CD8-positive, alpha-beta T cell (primary cell): ENCODE measurements at regions of chr13 and their contacts with region 1.

Region 1: GRCh38 chr13:40982772-40983171 is 36.3 kb downstream of the ELF1 start:
- DNase-seq: peak in 7 of 9 experiments; percentile 35 to 92 (median 59)
- ATAC-seq: peak; percentile 61
- H3K4me3 ChIP-seq: peak overlapping the region; percentile 36 to 52
- H3K4me3 Mint-ChIP-seq: peak overlapping the region; percentile 95
- H3K27ac ChIP-seq: peak overlapping the region; percentile 76 to 89
- H3K27ac Mint-ChIP-seq: peak overlapping the region; percentile 92
- H3K4me1 ChIP-seq: peaks cover 45% of the 10 kb centered on the region
- H3K4me1 Mint-ChIP-seq: peaks cover 61% of the 10 kb centered on the region
- H3K27me3 ChIP-seq: no peaks in the 10 kb centered on the region
- H3K27me3 Mint-ChIP-seq: no peaks in the 10 kb centered on the region
- CTCF ChIP-seq: no peak

Region 2: DNA sequence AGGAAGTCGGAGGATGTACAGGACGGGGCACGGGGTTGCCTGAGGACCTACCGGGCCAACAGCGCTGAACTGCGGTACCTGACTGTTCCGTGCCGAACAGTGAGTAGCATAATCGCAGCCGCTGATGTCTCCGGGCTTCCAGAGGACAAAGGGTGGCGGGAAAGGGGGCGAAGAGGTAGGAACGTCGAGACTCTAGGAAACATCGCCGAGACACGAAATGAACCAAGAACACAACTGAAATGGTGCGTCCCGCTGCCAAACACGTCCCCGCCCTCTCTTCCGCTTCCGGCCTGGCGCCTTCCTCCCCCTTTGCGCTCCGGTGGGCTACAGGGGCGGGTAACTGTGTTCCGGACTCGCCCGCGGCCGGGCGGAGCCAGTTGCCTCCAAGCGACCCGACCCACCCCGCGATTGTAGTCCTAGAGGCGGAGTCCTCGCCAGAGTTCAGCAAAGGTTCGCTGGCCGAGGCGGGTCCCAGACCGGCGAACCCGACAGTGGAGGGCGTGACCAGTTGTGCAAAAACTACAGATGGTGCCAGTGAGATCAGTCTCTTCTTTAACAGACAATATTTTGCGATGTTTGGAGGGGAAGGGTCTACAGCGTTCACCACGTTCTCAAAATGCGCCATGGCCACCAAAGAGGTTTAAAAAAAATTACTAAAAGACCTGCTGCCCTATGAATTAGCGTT is 211.7 kb before region 1 on chr13 and contains the start of gene MRPS31:
- CTCF ChIA-PET with region 1: no interaction called
- POLR2A ChIA-PET with region 1: no interaction called
- intact Hi-C with region 1: loop called in 1 of 2 experiments (anchors 5 kb)
- DNase-seq: peak; percentile 88 to 98 (median 95)
- ATAC-seq: peak; percentile 94
- H3K4me3 ChIP-seq: peak within 1 kb of the TSS; percentile 89 to 92
- H3K4me3 Mint-ChIP-seq: peak within 1 kb of the TSS; percentile 99
- H3K27ac ChIP-seq: peak within 1 kb of the TSS; percentile 74 to 87
- H3K27ac Mint-ChIP-seq: peak within 1 kb of the TSS; percentile 98
- H3K4me1 ChIP-seq: peaks cover 20% of the 10 kb centered on the region
- H3K4me1 Mint-ChIP-seq: peaks cover 41% of the 10 kb centered on the region
- H3K27me3 ChIP-seq: no peaks in the 10 kb centered on the region
- H3K27me3 Mint-ChIP-seq: no peaks in the 10 kb centered on the region
- CTCF ChIP-seq: no peak
- total RNA-seq, gene MRPS31: 7.3 to 7.5 TPM

Region 3: GRCh38 chr13:40969169-40969901 is 13.4 kb before region 1 on chr13:
- CTCF ChIA-PET with region 1: interaction called, 37 read pairs
- POLR2A ChIA-PET with region 1: interaction called, 5 read pairs
- intact Hi-C with region 1: loop called in 1 of 2 experiments (anchors 1 kb)
- DNase-seq: peak in 3 of 9 experiments; percentile 18 to 51 (median 29)
- ATAC-seq: peak; percentile 69
- H3K4me3 ChIP-seq: no peak overlapping the region
- H3K4me3 Mint-ChIP-seq: peak overlapping the region; percentile 40
- H3K27ac ChIP-seq: peak overlapping the region in 1 of 2 experiments; percentile 18
- H3K27ac Mint-ChIP-seq: peak overlapping the region; percentile 60
- H3K4me1 ChIP-seq: peaks cover 97% of the 10 kb centered on the region
- H3K4me1 Mint-ChIP-seq: peaks cover 95% of the 10 kb centered on the region
- H3K27me3 ChIP-seq: no peaks in the 10 kb centered on the region
- H3K27me3 Mint-ChIP-seq: no peaks in the 10 kb centered on the region
- CTCF ChIP-seq: no peak

Region 4: GRCh38 chr13:41004875-41005693 is 22.3 kb after region 1 on chr13:
- CTCF ChIA-PET with region 1: interaction called, 3 read pairs
- POLR2A ChIA-PET with region 1: interaction called, 5 read pairs
- intact Hi-C with region 1: loop called in 1 of 2 experiments (anchors 1 kb)
- DNase-seq: peak in 2 of 9 experiments; percentile 62 to 80
- ATAC-seq: peak; percentile 83
- H3K4me3 ChIP-seq: peak overlapping the region; percentile 6 to 13
- H3K4me3 Mint-ChIP-seq: peak overlapping the region; percentile 73
- H3K27ac ChIP-seq: peak overlapping the region; percentile 18 to 76
- H3K27ac Mint-ChIP-seq: peak overlapping the region; percentile 90
- H3K4me1 ChIP-seq: peaks cover 78% of the 10 kb centered on the region
- H3K4me1 Mint-ChIP-seq: peaks cover 79% of the 10 kb centered on the region
- H3K27me3 ChIP-seq: no peaks in the 10 kb centered on the region
- H3K27me3 Mint-ChIP-seq: no peaks in the 10 kb centered on the region
- CTCF ChIP-seq: no peak

Region 5: DNA sequence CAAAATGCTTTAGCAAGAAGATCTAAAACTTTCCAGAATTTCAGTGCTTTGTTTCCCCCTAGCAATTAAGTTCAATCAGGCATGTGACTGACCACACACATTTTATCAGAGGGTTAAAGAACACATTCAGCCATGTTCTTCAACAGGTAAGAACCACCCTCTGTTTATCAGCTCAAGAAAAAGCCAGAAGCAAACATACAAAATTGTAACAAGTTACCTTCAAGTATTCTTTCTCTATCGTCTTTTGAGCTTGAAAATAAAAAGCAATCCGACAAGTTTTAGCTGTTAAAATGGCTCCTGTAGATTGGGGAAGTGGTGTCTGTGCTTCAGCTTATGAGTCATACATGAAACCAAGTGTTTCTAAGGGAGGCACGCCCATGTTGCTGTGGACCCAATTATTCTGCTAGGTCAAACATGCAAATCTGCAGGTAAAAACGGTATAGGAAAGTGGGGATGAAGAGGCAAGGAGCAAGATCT is 36.3 kb after region 1 on chr13 and contains the start of gene ELF1:
- CTCF ChIA-PET with region 1: interaction called, 4 read pairs
- POLR2A ChIA-PET with region 1: interaction called, 16 read pairs
- intact Hi-C with region 1: loop called (anchors 1 to 2 kb)
- DNase-seq: peak in 8 of 9 experiments; percentile 28 to 89 (median 63)
- ATAC-seq: peak; percentile 88
- H3K4me3 ChIP-seq: peak within 1 kb of the TSS; percentile 56 to 68
- H3K4me3 Mint-ChIP-seq: peak within 1 kb of the TSS; percentile 88
- H3K27ac ChIP-seq: peak within 1 kb of the TSS; percentile 91 to 95
- H3K27ac Mint-ChIP-seq: peak within 1 kb of the TSS; percentile 97
- H3K4me1 ChIP-seq: peaks cover 25% of the 10 kb centered on the region
- H3K4me1 Mint-ChIP-seq: peaks cover 47% of the 10 kb centered on the region
- H3K27me3 ChIP-seq: no peaks in the 10 kb centered on the region
- H3K27me3 Mint-ChIP-seq: no peaks in the 10 kb centered on the region
- CTCF ChIP-seq: no peak
- total RNA-seq, gene ELF1: 308 to 313 TPM

Region 6: DNA sequence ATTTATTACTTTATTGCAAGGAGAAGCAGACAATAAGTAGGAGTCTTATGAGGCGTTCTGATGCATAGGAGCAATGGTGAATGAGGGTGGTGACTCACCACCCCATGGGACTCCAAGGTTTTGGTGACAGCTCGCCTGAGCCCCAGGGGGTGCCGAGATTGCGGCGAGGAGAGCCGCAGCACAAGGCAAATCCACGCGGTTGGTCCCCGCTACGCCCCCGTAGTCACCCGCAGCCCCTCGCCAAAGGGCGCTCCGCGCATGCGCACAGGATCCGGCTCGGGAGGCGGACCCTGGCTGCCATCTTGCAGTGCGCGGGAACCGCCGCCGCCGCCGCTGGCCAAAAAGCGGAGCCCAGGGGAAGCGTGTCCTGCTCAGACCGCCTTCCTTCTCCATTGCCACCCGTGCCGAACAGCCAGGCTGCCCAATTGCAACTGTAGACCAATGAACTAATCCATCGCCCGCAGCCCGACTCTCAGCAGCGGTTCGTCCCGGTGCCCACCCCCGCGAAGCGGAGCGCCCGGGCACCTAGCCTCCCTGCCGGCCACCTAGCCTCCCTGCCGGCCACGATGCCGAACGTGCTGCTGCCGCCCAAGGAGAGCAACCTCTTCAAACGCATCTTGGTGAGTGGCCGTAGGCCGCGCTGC is 328.3 kb after region 1 on chr13 and contains the start of gene NAA16:
- CTCF ChIA-PET with region 1: no interaction called
- POLR2A ChIA-PET with region 1: no interaction called
- intact Hi-C with region 1: loop called (anchors 5 to 10 kb)
- DNase-seq: peak; percentile 87 to 98 (median 95)
- ATAC-seq: peak; percentile 88
- H3K4me3 ChIP-seq: peak within 1 kb of the TSS; percentile 72 to 97
- H3K4me3 Mint-ChIP-seq: peak within 1 kb of the TSS; percentile 98
- H3K27ac ChIP-seq: peak within 1 kb of the TSS; percentile 72 to 83
- H3K27ac Mint-ChIP-seq: peak within 1 kb of the TSS; percentile 96
- H3K4me1 ChIP-seq: peaks cover 25% of the 10 kb centered on the region
- H3K4me1 Mint-ChIP-seq: peaks cover 41% of the 10 kb centered on the region
- H3K27me3 ChIP-seq: no peaks in the 10 kb centered on the region
- H3K27me3 Mint-ChIP-seq: no peaks in the 10 kb centered on the region
- CTCF ChIP-seq: no peak
- total RNA-seq, gene NAA16: 103 to 105 TPM

Region 7: DNA sequence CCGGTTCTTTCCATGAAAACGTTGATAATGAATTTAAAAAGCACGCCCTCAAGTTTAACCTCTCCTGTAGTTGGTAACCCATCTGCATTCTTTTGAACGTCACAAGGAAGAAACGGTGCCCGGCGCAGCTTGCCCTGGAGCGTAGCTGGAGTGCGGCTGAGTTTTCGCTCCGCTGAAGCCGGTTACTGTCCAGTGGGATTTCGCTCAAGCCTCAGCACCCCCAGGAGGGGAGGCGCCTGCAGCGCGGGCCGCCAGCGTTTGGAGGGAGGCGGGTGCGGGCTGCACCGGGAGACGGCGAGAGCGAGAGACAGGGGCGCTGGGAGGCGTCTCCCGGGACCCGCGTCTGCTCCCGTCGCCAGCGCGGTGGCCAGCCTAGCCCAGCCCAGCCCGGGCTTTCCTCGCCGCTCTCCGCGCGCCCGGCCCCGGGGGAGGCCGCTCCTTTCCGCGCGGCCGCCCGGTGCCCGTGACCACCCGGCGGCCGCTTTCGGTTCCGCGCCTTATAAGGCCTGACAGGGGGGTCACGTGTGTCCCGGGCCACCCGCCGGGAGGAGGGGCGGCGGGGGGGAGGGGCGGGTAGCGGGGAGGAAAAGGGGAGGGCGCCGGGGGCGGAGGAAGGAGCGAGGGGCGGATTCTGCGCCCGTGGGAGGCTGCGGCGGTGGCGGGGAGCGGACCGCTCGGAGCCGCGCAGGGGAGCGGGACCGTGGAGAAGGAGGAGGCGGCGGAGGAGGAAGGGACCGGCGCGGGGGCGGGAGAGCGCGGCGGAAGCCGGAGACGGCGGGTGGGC is 1057.4 kb after region 1 on chr13:
- CTCF ChIA-PET with region 1: no interaction called
- POLR2A ChIA-PET with region 1: no interaction called
- intact Hi-C with region 1: loop called in 1 of 2 experiments (anchors 10 kb)
- DNase-seq: peak; percentile 70 to 94 (median 88)
- ATAC-seq: peak; percentile 81
- H3K4me3 ChIP-seq: peak overlapping the region; percentile 47 to 88
- H3K4me3 Mint-ChIP-seq: peak overlapping the region; percentile 91
- H3K27ac ChIP-seq: peak overlapping the region; percentile 23 to 72
- H3K27ac Mint-ChIP-seq: peak overlapping the region; percentile 72
- H3K4me1 ChIP-seq: peaks cover 9% of the 10 kb centered on the region
- H3K4me1 Mint-ChIP-seq: peaks cover 16% of the 10 kb centered on the region
- H3K27me3 ChIP-seq: no peaks in the 10 kb centered on the region
- H3K27me3 Mint-ChIP-seq: no peaks in the 10 kb centered on the region
- CTCF ChIP-seq: no peak